T-cell (primary cell): ENCODE measurements at regions of chr6 and their contacts with region 1.

Region 1: DNA sequence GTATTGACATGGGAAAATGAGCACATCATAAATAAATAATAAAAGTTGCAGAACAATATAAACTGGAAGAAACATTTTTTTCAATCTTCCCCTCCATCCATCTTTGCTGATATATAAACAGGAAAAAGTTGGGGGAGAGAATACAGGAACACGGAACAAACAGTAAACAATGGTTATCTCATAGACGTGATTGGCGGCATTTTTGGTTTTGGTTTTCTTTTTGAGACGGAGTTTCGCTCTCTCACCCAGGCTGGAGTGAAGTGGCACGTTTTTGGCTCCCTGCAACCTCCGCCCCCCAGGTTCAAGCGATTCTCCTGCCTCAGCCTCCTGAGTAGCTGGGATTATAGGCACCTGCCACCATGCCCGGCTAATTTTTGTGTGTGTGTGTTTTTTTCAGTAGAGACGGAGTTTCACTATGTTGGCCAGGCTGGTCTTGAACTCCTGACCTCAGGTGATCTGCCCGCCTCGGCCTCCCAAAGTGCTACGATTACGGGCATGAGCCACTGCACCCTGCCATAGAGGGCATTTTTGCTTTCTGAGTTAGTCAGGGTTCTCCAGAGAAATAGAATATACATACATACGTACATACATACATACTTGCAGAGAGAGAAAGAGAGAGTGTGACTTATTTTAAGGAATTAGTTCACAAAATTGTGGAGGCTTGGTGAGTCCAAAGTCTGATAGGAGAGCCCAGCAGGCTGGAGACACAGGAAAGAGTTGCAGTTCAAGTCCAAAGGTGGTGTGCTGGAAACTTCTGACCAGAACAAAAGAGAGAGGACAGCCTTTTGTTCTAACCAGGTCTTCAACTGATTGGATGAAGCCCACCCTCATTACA is 22.6 kb downstream of the GNL1 start:
- DNase-seq: peak in 1 of 35 experiments; percentile 59
- ATAC-seq: no peak
- H3K4me3 ChIP-seq: peak overlapping the region in 1 of 2 donors; percentile 14
- H3K4me3 Mint-ChIP-seq: peak overlapping the region; percentile 66 to 81 (median 68)
- H3K27ac ChIP-seq: peak overlapping the region; percentile 49
- H3K27ac Mint-ChIP-seq: peak overlapping the region; percentile 87 to 96
- H3K4me1 ChIP-seq: peaks cover 10 to 36% of the 10 kb centered on the region in 2 experiments
- H3K4me1 Mint-ChIP-seq: peaks cover 36 to 41% (median 37%) of the 10 kb centered on the region in 3 donors
- H3K27me3 ChIP-seq: no peaks in the 10 kb centered on the region
- H3K27me3 Mint-ChIP-seq: no peaks in the 10 kb centered on the region

Region 2: GRCh38 chr6:30483677-30484279 is 49.9 kb before region 1 on chr6:
- CTCF ChIA-PET with region 1: interaction called, 13 to 36 read pairs
- POLR2A ChIA-PET with region 1: interaction called in 1 of 2 experiments, 6 read pairs
- DNase-seq: peak in 2 of 35 experiments; percentile 48 to 77
- ATAC-seq: no peak
- H3K4me3 ChIP-seq: no peak overlapping the region
- H3K4me3 Mint-ChIP-seq: no peak overlapping the region
- H3K27ac ChIP-seq: no peak overlapping the region
- H3K27ac Mint-ChIP-seq: no peak overlapping the region
- H3K4me1 ChIP-seq: peaks cover 12 to 35% of the 10 kb centered on the region in 2 experiments
- H3K4me1 Mint-ChIP-seq: peaks cover 31 to 43% (median 40%) of the 10 kb centered on the region in 3 donors
- H3K27me3 ChIP-seq: peaks cover 0 to 21% of the 10 kb centered on the region in 2 experiments
- H3K27me3 Mint-ChIP-seq: peaks cover 17 to 31% of the 10 kb centered on the region in 2 donors

Region 3: GRCh38 chr6:30489081-30490025 is 44.3 kb before region 1 on chr6 and contains the start of gene HLA-E:
- CTCF ChIA-PET with region 1: interaction called, 13 to 36 read pairs
- POLR2A ChIA-PET with region 1: interaction called, 6 to 12 read pairs
- DNase-seq: peak; percentile 69 to 99 (median 90)
- ATAC-seq: peak; percentile 78 to 84 (median 84)
- H3K4me3 ChIP-seq: peak within 1 kb of the TSS; percentile 82 to 93
- H3K4me3 Mint-ChIP-seq: peak within 1 kb of the TSS; percentile 98 to 99 (median 99)
- H3K27ac ChIP-seq: peak within 1 kb of the TSS; percentile 89
- H3K27ac Mint-ChIP-seq: peak within 1 kb of the TSS; percentile 98 to 99
- H3K4me1 ChIP-seq: peaks cover 34 to 54% of the 10 kb centered on the region in 2 experiments
- H3K4me1 Mint-ChIP-seq: peaks cover 40 to 59% (median 56%) of the 10 kb centered on the region in 3 donors
- H3K27me3 ChIP-seq: peaks cover 0 to 3% of the 10 kb centered on the region in 2 experiments
- H3K27me3 Mint-ChIP-seq: no peaks in the 10 kb centered on the region
- total RNA-seq, gene HLA-E: 1,114 to 1,417 (median 1,253) TPM

Region 4: DNA sequence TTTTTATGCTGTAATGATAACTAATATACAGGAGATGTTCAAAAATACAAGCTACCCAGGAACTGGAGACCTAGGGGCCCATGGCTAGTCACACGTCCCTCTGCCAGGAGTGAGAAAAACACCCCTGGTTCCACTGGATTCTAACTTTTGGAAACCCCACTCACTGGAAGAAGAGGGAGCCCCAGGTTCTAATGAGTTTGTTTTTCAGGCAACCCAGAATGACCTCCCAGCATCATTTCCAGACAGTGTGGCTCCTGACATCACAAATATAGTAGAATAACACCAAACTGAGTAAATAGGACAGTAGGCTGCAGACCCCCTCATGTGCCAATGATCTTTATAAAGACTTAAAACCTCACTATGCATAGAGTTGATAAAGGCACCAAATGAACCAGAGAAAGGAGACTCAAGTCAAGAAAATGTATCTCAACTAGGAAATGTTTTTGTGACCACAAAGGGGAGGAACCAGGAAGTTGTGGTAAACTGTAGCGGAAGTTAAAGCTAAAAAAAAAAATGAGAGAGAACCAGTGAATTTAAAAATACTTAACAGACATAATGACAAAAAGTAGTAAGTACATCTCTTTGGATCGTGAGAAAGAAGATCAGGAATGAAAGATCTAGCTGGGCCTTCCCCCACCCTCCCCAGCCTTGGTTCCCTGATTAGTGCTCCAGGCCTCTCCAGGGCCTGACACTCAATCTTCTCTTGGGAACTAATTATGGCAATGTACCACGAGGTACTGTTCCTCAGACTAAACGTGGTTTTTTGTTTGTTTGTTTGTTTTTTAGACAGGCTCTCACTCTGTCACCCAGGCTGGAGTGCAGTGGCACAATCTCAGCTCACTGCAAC is 24.6 kb before region 1 on chr6:
- CTCF ChIA-PET with region 1: interaction called, 3 to 17 read pairs
- POLR2A ChIA-PET with region 1: interaction called in 1 of 2 experiments, 6 read pairs
- DNase-seq: peak in 5 of 35 experiments; percentile 31 to 84 (median 45)
- ATAC-seq: peak; percentile 80 to 87 (median 85)
- H3K4me3 ChIP-seq: peak overlapping the region; percentile 13 to 27
- H3K4me3 Mint-ChIP-seq: peak overlapping the region; percentile 10 to 73 (median 43)
- H3K27ac ChIP-seq: peak overlapping the region; percentile 65
- H3K27ac Mint-ChIP-seq: peak overlapping the region; percentile 80 to 86
- H3K4me1 ChIP-seq: peaks cover 60 to 83% of the 10 kb centered on the region in 2 experiments
- H3K4me1 Mint-ChIP-seq: peaks cover 53 to 68% (median 59%) of the 10 kb centered on the region in 3 donors
- H3K27me3 ChIP-seq: no peaks in the 10 kb centered on the region
- H3K27me3 Mint-ChIP-seq: no peaks in the 10 kb centered on the region

Region 5: GRCh38 chr6:30515932-30516753 is 17.5 kb before region 1 on chr6:
- CTCF ChIA-PET with region 1: interaction called in 1 of 2 experiments, 17 read pairs
- POLR2A ChIA-PET with region 1: interaction called in 1 of 2 experiments, 10 read pairs
- DNase-seq: peak; percentile 73 to 97 (median 90)
- ATAC-seq: peak; percentile 86 to 89 (median 88)
- H3K4me3 ChIP-seq: peak overlapping the region; percentile 45 to 62
- H3K4me3 Mint-ChIP-seq: peak overlapping the region; percentile 84 to 89 (median 85)
- H3K27ac ChIP-seq: peak overlapping the region; percentile 93
- H3K27ac Mint-ChIP-seq: peak overlapping the region; percentile 98 to 99
- H3K4me1 ChIP-seq: peaks cover 37 to 84% of the 10 kb centered on the region in 2 experiments
- H3K4me1 Mint-ChIP-seq: peaks cover 63 to 73% (median 68%) of the 10 kb centered on the region in 3 donors
- H3K27me3 ChIP-seq: no peaks in the 10 kb centered on the region
- H3K27me3 Mint-ChIP-seq: no peaks in the 10 kb centered on the region